A549 (cell line): ENCODE measurements at regions of chr19 and their contacts with region 1.

Region 1: DNA sequence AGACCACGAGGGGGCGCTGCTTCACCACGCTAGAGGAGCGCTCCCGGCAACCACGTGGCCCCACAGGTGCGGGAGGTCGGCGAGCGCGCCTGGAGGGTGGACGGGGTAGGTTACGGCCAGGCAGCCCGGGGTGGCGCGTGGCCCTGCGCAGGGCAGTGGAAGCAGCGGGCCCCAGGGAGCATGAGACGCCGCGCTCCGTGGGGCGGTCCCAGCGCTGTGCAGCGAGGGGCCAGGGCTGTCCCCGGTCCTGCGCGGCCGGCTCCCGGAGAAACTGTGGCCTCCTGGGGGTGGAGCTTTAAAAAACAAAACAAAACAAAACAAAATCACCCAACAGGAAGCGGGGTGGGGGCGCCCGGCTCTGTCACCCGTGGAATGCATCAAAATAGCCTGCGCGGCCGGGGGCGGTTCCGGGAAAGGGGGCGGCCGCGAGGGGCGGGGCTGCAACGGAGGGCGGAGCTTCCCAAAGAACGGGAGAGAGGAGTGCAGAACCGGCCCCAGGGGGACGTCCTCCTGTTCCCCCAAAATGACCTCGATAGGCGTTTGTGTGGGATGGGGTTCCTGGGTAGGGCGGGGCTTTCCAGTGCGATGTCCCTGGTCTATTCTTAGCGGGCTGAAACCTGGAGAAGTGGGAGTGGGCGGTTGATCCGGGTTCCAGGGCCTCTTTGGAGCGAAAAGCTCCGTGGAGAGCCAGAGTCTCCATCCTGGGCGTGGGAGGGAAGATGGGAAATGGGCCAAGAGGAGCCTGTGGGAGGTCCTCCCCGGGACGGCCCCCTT is 27.3 kb downstream of the NUMBL start:
- DNase-seq: peak; percentile 95 to 97
- ATAC-seq: peak; percentile 79 to 87
- H3K4me3 ChIP-seq: peak overlapping the region; percentile 57
- H3K27ac ChIP-seq: peak overlapping the region; percentile 81 to 83
- H3K4me1 ChIP-seq: peaks cover 39% of the 10 kb centered on the region
- CTCF ChIP-seq: peak; percentile 100
- EP300 ChIP-seq: no peak
- POLR2A ChIP-seq: peak; percentile 50
- RAD21 ChIP-seq: peak; percentile 100

Region 2: GRCh38 chr19:40650749-40651305 is 12.3 kb before region 1 on chr19:
- CTCF ChIA-PET with region 1: interaction called, 89 read pairs
- POLR2A ChIA-PET with region 1: interaction called, 10 read pairs
- DNase-seq: no peak
- ATAC-seq: no peak
- H3K4me3 ChIP-seq: no peak overlapping the region
- H3K27ac ChIP-seq: no peak overlapping the region
- H3K4me1 ChIP-seq: peaks cover 11% of the 10 kb centered on the region
- CTCF ChIP-seq: no peak
- EP300 ChIP-seq: no peak
- POLR2A ChIP-seq: no peak
- RAD21 ChIP-seq: no peak

Region 3: DNA sequence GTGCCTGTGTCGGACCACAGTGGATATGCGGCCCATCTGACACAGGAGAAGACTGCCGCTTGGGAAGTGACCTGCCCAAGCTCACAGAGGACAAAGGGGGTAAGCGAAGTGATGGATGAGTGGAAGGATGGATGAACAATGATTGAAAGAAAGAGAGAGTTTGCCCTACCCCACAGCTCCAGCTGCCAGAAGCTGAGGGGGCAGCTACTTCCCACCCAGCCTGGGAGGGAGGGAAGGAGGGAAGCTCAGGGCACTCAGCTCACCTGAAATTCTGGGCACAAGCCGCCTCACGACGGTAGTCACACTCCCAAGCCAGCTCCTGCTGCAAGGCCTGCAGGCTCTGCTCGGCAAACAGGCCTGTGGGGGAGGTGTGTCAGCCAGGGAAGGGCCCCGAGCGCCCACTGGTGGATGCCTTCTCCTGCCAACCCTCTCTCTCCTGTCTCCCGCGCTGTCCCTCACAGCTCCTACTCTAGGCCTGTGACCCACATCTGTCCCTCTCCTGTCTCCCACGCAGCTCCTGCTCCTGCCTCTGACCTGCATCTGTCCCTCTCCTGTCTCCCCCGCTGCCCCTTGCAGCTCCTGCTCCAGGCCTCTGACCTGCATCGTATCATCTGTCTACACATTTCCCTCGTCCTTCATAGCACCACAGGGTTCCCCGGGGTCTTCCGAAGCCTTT is 39.4 kb after region 1 on chr19:
- CTCF ChIA-PET with region 1: interaction called, 178 read pairs
- POLR2A ChIA-PET with region 1: interaction called, 9 read pairs
- DNase-seq: peak; percentile 82 to 84
- ATAC-seq: peak; percentile 88 to 96
- H3K4me3 ChIP-seq: no peak overlapping the region
- H3K27ac ChIP-seq: peak overlapping the region in 1 of 2 experiments; percentile 44; a peak in 3 of 6 replicates
- H3K4me1 ChIP-seq: peaks cover 8% of the 10 kb centered on the region; the same call in 2 of the 3 replicates
- CTCF ChIP-seq: peak; percentile 69
- EP300 ChIP-seq: no peak
- POLR2A ChIP-seq: no peak
- RAD21 ChIP-seq: peak; percentile 71 to 83

Region 4: GRCh38 chr19:40744554-40745401 is 81.7 kb after region 1 on chr19:
- CTCF ChIA-PET with region 1: interaction called, 43 read pairs
- POLR2A ChIA-PET with region 1: no interaction called
- DNase-seq: no peak
- ATAC-seq: peak; percentile 7 to 46; a peak in 4 of 6 replicates
- H3K4me3 ChIP-seq: no peak overlapping the region
- H3K27ac ChIP-seq: peak overlapping the region in 1 of 2 experiments; percentile 64; a peak in 3 of 6 replicates
- H3K4me1 ChIP-seq: peaks cover 28% of the 10 kb centered on the region
- CTCF ChIP-seq: peak; percentile 24; the same call in 1 of the 3 replicates
- EP300 ChIP-seq: no peak
- POLR2A ChIP-seq: no peak
- RAD21 ChIP-seq: peak; percentile 34; a peak in 4 of 5 replicates

Region 5: DNA sequence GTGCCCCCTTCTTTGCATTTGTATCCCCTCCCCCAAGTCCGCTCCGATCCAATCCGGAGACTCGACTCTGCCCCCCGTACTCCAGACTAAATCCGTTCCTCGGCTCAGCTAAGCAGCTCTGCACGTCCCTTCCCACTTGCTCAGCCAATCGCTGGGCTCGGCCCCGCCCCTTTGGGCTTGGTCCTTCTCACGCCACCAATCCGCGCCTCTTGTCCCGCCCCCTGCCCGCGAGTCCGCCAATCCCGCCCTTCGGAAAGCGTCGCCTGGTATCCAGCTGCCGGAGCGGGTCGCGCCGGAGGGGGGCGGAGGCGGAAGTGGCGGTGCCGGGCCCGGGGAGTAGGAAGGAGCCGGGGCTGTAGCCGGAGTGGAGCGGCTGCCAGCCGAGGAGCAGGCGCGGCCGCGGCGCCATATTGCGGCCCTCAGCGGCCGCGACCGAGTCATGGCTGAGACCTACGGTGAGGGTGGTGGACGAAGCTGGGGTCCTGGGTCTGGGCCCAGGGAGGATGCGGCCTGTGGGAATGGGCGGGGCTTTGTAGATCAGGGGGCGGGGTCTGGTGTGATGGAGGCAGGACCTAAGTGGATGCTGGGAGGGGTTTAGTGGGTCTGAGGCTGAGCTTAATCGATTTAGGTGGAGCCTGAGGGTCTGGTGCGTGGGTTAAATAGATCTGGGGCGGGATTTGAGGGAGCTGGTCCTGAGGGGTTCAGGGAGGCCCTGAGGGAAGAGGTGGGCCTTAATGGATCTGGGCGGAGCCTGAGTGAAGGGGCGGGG is 115.0 kb after region 1 on chr19 and contains the start of gene RAB4B:
- CTCF ChIA-PET with region 1: interaction called, 32 read pairs
- POLR2A ChIA-PET with region 1: interaction called, 11 read pairs
- DNase-seq: peak; percentile 100
- ATAC-seq: peak; percentile 86 to 93
- H3K4me3 ChIP-seq: peak within 1 kb of the TSS; percentile 52
- H3K27ac ChIP-seq: peak within 1 kb of the TSS; percentile 84 to 87
- H3K4me1 ChIP-seq: peaks cover 14% of the 10 kb centered on the region
- CTCF ChIP-seq: no peak
- EP300 ChIP-seq: no peak
- POLR2A ChIP-seq: peak; percentile 61
- RAD21 ChIP-seq: no peak
- polyA plus RNA-seq, gene RAB4B: 20.7 and 25.0 TPM in 2 replicates

Region 6: DNA sequence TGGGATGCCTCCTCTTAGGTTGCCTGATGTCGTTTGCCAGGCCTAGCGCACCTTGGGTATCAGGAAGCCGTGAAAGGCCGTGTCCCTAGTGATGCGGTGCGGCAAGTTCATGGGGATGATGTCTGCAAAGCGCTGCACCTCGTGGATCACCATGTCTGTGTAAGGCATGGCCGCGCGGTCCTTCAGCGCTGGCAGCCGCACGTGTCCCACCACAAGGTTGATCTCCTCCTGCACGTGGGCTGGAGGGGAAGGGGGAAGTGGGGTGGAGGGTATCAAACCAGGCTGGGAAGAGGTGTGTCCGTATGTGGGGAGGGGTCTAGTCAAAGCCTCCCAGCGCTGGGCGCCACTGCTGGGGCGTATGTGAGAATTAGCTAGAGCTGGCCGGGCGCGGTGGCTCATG is 159.1 kb after region 1 on chr19:
- CTCF ChIA-PET with region 1: interaction called, 68 read pairs
- POLR2A ChIA-PET with region 1: no interaction called
- DNase-seq: no peak
- ATAC-seq: no peak
- H3K4me3 ChIP-seq: no peak overlapping the region
- H3K27ac ChIP-seq: peak overlapping the region in 1 of 2 experiments; percentile 31; a peak in 2 of 6 replicates
- H3K4me1 ChIP-seq: peaks cover 39% of the 10 kb centered on the region
- CTCF ChIP-seq: no peak
- EP300 ChIP-seq: no peak
- POLR2A ChIP-seq: no peak
- RAD21 ChIP-seq: no peak

Region 7: GRCh38 chr19:41310033-41310758 is 647.1 kb after region 1 on chr19 and contains the start of gene CCDC97:
- CTCF ChIA-PET with region 1: interaction called, 15 read pairs
- POLR2A ChIA-PET with region 1: no interaction called
- DNase-seq: peak; percentile 94 to 99
- ATAC-seq: peak; percentile 60 to 78
- H3K4me3 ChIP-seq: peak within 1 kb of the TSS; percentile 57
- H3K27ac ChIP-seq: peak within 1 kb of the TSS; percentile 91 to 92
- H3K4me1 ChIP-seq: peaks cover 24% of the 10 kb centered on the region
- CTCF ChIP-seq: no peak
- EP300 ChIP-seq: peak in 1 of 2 experiments; percentile 58; a peak in 1 of 5 replicates
- POLR2A ChIP-seq: no peak; the same call in none of the 2 replicates
- RAD21 ChIP-seq: peak; percentile 19 to 50
- polyA plus RNA-seq, gene CCDC97: 18.7 and 21.4 TPM in 2 replicates